Activated CD4-positive, alpha-beta T cell treated with anti-CD3 and anti-CD28 coated beads, Interleukin-2, amount 10 ng/mL, durations not matched to agents 7 days and 5 days (primary cell): ENCODE measurements at regions of chr5 and their contacts with region 1.

Region 1: DNA sequence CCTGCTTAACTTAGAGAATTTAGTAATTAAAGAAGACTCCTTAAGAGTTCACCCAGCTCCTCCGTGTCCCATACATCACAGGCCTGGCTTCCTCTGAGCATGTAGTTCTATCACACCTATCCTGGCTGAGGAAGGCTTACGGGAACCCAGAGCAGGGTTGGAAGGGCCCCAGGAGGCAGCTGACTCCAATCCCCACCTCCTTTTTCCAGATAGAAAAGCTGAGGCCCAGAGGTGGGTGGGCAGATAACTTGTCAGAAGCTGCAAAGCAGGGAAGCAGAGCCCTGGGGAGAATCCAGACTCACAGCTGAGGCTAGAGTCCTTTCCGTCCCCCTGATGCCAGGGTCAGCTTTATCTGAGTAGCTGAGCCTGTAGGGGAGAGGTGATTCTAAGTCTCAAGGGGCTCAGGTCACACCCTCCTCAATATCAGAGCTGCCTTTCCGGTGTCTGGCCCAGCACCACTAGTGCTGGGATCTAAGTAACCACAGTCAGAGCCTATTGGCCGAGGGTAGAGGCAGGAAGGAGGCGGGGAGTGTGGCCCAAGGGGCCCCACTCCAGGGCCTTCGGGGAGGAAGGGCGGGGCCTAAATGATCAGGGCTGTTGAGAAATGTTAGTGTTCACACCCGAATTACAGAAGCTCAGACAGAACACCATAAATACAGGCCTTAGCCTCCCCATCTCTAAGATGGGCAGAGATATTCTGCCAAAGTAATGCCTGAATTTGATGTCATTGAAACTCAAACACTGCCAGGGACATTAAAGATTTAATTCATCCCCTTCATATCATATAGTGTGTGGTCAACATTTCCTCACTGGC is 9.9 kb downstream of the CCDC69 start:
- DNase-seq: peak; percentile 94
- H3K4me3 Mint-ChIP-seq: peak overlapping the region; percentile 71
- H3K27ac Mint-ChIP-seq: peak overlapping the region; percentile 97
- H3K4me1 Mint-ChIP-seq: peaks cover 85% of the 10 kb centered on the region
- H3K27me3 Mint-ChIP-seq: no peaks in the 10 kb centered on the region

Region 2: DNA sequence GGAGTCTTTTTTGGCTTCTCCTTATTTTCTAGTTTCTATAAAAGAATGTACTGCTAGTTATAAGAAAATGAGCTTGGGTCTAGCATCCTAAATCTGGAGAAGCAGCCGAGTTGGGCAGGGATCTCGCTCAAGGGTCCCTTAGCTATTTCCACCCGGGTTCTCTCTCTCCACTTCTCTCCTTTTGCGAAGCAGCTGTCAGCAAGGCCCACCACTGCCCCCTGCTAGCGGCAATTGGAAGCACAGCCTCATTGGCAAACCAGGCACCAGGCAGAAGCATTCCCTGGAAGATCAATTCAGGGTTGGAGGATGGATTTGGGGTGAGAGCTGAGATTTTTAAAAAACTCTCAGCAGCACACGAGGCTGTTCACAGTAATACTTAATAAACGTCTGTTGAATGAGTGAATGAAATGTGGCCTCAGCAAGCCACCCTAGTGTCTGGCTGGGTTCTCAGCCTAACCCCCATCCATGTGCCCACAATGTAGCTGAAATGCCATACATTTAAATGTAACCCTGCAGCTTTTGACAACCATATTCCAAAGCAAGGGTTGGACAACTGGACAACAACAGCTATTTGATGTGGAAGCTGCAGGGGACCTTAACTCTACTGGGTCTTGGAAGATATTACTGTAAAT is 98.6 kb before region 1 on chr5:
- CTCF ChIA-PET with region 1: no interaction called
- POLR2A ChIA-PET with region 1: no interaction called
- DNase-seq: peak; percentile 72
- H3K4me3 Mint-ChIP-seq: no peak overlapping the region
- H3K27ac Mint-ChIP-seq: no peak overlapping the region
- H3K4me1 Mint-ChIP-seq: peaks cover 2% of the 10 kb centered on the region
- H3K27me3 Mint-ChIP-seq: no peaks in the 10 kb centered on the region

Region 3: GRCh38 chr5:151202381-151203139 is 11.4 kb before region 1 on chr5:
- CTCF ChIA-PET with region 1: interaction called, 11 read pairs
- POLR2A ChIA-PET with region 1: interaction called, 7 read pairs
- DNase-seq: no peak
- H3K4me3 Mint-ChIP-seq: no peak overlapping the region
- H3K27ac Mint-ChIP-seq: peak overlapping the region; percentile 68
- H3K4me1 Mint-ChIP-seq: peaks cover 27% of the 10 kb centered on the region
- H3K27me3 Mint-ChIP-seq: no peaks in the 10 kb centered on the region

Region 4: DNA sequence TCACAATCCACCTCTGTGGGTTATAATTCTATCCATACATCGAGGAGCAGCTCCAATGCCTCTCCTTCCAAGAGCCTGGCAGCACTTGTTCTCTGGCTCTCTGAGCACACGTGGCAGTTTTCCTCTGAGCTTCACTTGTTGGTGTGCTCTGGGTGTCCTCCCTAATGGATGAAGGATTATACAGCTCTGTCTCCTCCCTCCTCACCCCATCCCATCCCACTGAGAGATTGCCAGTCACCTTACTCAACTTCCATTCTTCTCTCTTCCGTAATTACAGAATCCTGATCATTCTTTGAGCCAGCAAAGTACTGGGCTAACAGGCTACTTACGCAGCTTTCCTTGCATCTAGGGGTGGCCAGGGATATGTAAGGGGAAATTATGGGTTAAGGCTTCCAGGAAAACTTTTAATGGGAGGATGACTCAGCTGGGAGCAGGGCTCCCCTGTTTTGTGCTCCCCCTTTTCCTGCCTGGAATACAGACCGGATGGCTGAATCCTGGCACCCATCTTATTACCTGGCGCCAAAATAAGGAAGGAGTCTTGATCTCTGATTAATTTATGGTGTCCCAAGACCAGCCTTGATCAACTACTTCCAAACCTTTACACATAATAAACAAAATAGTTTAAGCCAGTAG is 16.2 kb after region 1 on chr5:
- CTCF ChIA-PET with region 1: interaction called, 25 read pairs
- POLR2A ChIA-PET with region 1: interaction called, 3 read pairs
- DNase-seq: no peak
- H3K4me3 Mint-ChIP-seq: no peak overlapping the region
- H3K27ac Mint-ChIP-seq: no peak overlapping the region
- H3K4me1 Mint-ChIP-seq: peaks cover 20% of the 10 kb centered on the region
- H3K27me3 Mint-ChIP-seq: no peaks in the 10 kb centered on the region

Region 5: GRCh38 chr5:151239237-151239861 is 25.3 kb after region 1 on chr5:
- CTCF ChIA-PET with region 1: interaction called, 13 read pairs
- POLR2A ChIA-PET with region 1: no interaction called
- DNase-seq: peak; percentile 61
- H3K4me3 Mint-ChIP-seq: no peak overlapping the region
- H3K27ac Mint-ChIP-seq: no peak overlapping the region
- H3K4me1 Mint-ChIP-seq: peaks cover 41% of the 10 kb centered on the region
- H3K27me3 Mint-ChIP-seq: no peaks in the 10 kb centered on the region